ENCODE measurements at regions of chr15 and their contacts with region 1.

Region 1: GRCh38 chr15:88419830-88420229 is 47.4 kb downstream of the MRPL46 start:
- DNase-seq: peak; percentile 71
- ATAC-seq: peak; percentile 37; the same call in 1 of the 2 replicates
- H3K4me3 ChIP-seq: no peak overlapping the region
- H3K27ac ChIP-seq: no peak overlapping the region
- H3K4me1 ChIP-seq: no peaks in the 10 kb centered on the region
- H3K27me3 ChIP-seq: no peaks in the 10 kb centered on the region; the same call in 1 of the 2 replicates
- CTCF ChIP-seq: no peak
- POLR2A ChIP-seq: no peak
- RAD21 ChIP-seq: no peak

Region 2: DNA sequence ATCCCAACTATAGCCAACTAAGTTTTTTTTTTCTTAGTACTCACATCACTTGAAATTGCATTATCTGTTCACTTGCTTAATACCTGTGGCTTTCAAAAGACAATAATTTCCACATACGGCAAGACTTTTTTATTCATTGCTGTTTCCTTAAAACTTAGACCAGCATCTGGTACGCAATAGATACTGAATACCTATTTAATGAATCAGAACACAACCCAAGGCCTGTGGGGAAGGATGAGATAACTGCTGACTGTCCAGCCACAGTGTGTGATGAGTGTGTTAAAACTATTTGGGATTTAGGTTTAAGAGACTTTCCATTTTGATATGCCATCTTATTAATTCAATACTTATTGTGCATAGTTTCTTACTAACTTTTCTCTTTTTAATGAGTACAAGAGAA is 1152.0 kb before region 1 on chr15:
- CTCF ChIA-PET with region 1: no interaction called
- POLR2A ChIA-PET with region 1: no interaction called
- dilution Hi-C with region 1: no loop called
- in situ Hi-C with region 1: no loop called
- intact Hi-C with region 1: loop called (anchors 5 kb)
- DNase-seq: peak; percentile 36
- ATAC-seq: no peak
- H3K4me3 ChIP-seq: no peak overlapping the region
- H3K27ac ChIP-seq: no peak overlapping the region
- H3K4me1 ChIP-seq: no peaks in the 10 kb centered on the region
- H3K27me3 ChIP-seq: no peaks in the 10 kb centered on the region
- CTCF ChIP-seq: no peak
- POLR2A ChIP-seq: no peak
- RAD21 ChIP-seq: no peak

Region 3: DNA sequence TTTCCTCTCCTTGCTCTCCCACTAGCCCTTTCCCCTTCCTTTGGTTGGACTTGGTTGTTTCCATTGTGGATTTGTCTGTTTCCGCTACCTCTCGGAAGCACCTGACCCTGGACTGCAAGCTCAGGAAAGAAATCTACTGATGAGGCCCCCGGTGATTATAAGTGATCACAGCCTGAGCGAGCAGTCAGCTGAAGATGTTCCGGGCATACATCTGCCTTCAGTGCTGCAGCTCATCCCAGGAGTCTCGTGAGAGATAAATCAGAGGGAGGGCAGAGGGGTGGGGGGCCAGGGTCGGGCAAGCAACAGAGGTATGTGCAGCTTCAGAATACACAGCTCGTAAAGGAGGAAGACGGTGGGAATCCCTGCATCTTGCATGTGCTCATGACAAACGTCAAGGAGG is 54.7 kb before region 1 on chr15:
- CTCF ChIA-PET with region 1: no interaction called
- POLR2A ChIA-PET with region 1: no interaction called
- dilution Hi-C with region 1: no loop called
- in situ Hi-C with region 1: no loop called
- intact Hi-C with region 1: no loop called
- DNase-seq: no peak
- ATAC-seq: no peak
- H3K4me3 ChIP-seq: no peak overlapping the region
- H3K27ac ChIP-seq: no peak overlapping the region
- H3K4me1 ChIP-seq: no peaks in the 10 kb centered on the region
- H3K27me3 ChIP-seq: no peaks in the 10 kb centered on the region
- CTCF ChIP-seq: no peak
- POLR2A ChIP-seq: no peak
- RAD21 ChIP-seq: no peak

Region 4: GRCh38 chr15:88447206-88447605 is 27.4 kb after region 1 on chr15:
- CTCF ChIA-PET with region 1: no interaction called
- POLR2A ChIA-PET with region 1: no interaction called
- dilution Hi-C with region 1: no loop called
- in situ Hi-C with region 1: no loop called
- intact Hi-C with region 1: no loop called
- DNase-seq: no peak
- ATAC-seq: peak; percentile 29; the same call in 1 of the 2 replicates
- H3K4me3 ChIP-seq: no peak overlapping the region
- H3K27ac ChIP-seq: no peak overlapping the region
- H3K4me1 ChIP-seq: no peaks in the 10 kb centered on the region
- H3K27me3 ChIP-seq: peaks cover 8% of the 10 kb centered on the region
- CTCF ChIP-seq: no peak
- POLR2A ChIP-seq: no peak
- RAD21 ChIP-seq: no peak